Kidney (tissue), 22 donors: ENCODE measurements at regions of chr6 and their contacts with region 1.

Region 1: DNA sequence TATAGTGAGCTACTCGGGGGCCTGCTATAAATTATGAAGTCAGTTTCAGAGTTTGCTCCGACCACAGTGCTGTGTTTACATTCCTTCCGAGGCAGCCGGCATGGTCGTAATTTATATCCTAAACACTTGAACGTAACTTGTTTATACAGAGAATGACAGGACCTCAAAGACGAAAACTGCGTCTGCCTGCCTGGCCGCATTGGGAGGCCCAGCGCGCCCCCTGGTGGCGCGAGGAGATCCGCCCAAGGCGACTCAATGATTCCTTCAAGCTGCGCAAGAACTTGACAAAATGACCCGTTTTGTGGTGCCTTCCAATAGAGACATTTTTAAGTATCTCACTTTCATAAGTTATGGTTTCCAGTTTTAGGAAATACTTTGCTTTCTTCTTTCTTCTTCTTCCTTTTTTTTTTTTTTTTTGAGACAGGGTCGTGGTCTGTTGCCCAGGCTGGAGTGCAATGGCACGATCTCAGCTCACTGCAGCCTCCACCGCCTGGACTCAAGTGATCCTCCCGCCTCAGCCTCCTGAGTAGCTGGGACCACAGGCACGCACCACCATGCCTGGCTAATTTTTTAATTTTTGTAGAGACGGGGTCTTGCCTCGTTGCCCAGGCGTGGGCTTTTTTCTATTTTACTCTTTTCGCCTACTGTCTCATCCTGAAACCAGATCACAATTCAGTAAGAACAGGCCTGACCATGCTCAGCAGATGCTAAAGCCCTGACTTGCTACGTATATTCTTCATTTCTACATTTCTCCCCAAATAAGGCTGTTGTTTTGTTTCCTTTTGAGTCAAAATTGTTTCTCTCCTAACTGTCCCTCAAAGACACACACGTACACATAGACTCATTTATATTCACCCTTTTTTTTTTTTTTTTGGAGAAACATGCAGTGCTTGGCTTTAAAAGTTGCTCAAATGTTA is 7.8 kb downstream of the FOXF2 start:
- DNase-seq: peak; percentile 82 to 91 (median 84)
- H3K4me3 ChIP-seq: no peak overlapping the region
- H3K27ac ChIP-seq: no peak overlapping the region
- H3K4me1 ChIP-seq: no peaks in the 10 kb centered on the region
- H3K27me3 ChIP-seq: peaks cover 62% of the 10 kb centered on the region
- CTCF ChIP-seq: peak; percentile 83

Region 2: GRCh38 chr6:582370-582769 is 814.8 kb before region 1 on chr6:
- intact Hi-C with region 1: loop called (anchors 10 kb)
- DNase-seq: peak in 3 of 5 donors; percentile 20 to 58 (median 37)
- H3K4me3 ChIP-seq: no peak overlapping the region
- H3K27ac ChIP-seq: no peak overlapping the region
- H3K4me1 ChIP-seq: no peaks in the 10 kb centered on the region
- H3K27me3 ChIP-seq: no peaks in the 10 kb centered on the region
- CTCF ChIP-seq: no peak

Region 3: DNA sequence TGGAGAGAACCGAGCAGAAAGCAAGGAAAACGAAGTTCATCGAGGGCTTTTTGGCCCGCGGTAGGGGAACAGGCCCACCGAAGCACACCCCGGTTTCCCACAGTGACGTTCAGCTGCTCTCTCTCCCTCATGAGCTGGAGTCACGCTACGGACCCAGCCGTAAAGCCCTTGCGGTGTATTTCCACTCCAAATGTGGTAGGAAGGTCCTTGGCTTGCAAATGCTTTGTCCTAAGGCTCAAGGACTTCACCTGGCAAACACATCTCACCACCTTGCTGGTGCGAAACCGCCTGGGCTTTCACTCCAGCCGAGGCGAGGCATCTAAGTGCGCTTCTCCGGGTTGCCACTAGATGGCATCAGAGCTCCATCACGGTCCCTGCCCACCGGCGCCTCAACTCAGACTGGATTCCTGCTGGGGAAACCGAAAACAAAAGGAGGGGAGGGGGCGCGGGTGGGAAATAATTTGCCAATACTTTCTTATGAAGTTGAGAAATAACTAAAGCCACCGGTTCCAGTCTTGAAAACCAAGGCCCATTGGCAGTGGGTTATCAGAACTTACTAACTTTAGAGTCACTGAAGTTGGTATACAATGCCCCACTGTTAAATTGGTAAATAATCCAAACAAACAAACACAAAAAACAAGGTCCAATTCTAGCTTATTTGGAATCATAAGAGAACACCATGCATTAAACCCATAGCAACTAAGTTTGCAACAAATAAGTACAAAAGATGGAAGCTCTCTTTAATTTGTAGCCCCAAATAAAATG is 199.1 kb after region 1 on chr6:
- intact Hi-C with region 1: no loop called
- DNase-seq: peak in 4 of 5 donors; percentile 77 to 85 (median 78)
- H3K4me3 ChIP-seq: peak overlapping the region in 2 of 3 donors; percentile 30 to 43
- H3K27ac ChIP-seq: no peak overlapping the region
- H3K4me1 ChIP-seq: peaks cover 0 to 2% (median 0%) of the 10 kb centered on the region in 3 donors
- H3K27me3 ChIP-seq: peaks cover 8% of the 10 kb centered on the region
- CTCF ChIP-seq: peak; percentile 90